T-cell (primary cell): ENCODE measurements at regions of chr22 and their contacts with region 1.

Region 1: GRCh38 chr22:35330258-35330861 is 30.7 kb downstream of the TOM1 start:
- DNase-seq: peak in 34 of 35 experiments; percentile 16 to 68 (median 37)
- ATAC-seq: peak; percentile 63 to 82 (median 80)
- H3K4me3 ChIP-seq: peak overlapping the region in 1 of 2 donors; percentile 44
- H3K4me3 Mint-ChIP-seq: peak overlapping the region; percentile 35 to 68 (median 49)
- H3K27ac ChIP-seq: peak overlapping the region; percentile 48
- H3K27ac Mint-ChIP-seq: peak overlapping the region; percentile 88 to 95
- H3K4me1 ChIP-seq: peaks cover 18 to 40% of the 10 kb centered on the region in 2 experiments
- H3K4me1 Mint-ChIP-seq: peaks cover 23 to 49% (median 38%) of the 10 kb centered on the region in 3 donors
- H3K27me3 ChIP-seq: no peaks in the 10 kb centered on the region
- H3K27me3 Mint-ChIP-seq: no peaks in the 10 kb centered on the region

Region 2: GRCh38 chr22:35288116-35288515 is 42.2 kb before region 1 on chr22:
- CTCF ChIA-PET with region 1: interaction called in 1 of 2 experiments, 11 read pairs
- POLR2A ChIA-PET with region 1: interaction called in 1 of 2 experiments, 3 read pairs
- DNase-seq: no peak
- ATAC-seq: no peak
- H3K4me3 ChIP-seq: no peak overlapping the region
- H3K4me3 Mint-ChIP-seq: no peak overlapping the region
- H3K27ac ChIP-seq: no peak overlapping the region
- H3K27ac Mint-ChIP-seq: no peak overlapping the region
- H3K4me1 ChIP-seq: no peaks in the 10 kb centered on the region
- H3K4me1 Mint-ChIP-seq: no peaks in the 10 kb centered on the region
- H3K27me3 ChIP-seq: no peaks in the 10 kb centered on the region
- H3K27me3 Mint-ChIP-seq: no peaks in the 10 kb centered on the region